WTC11 (cell line): ENCODE measurements at regions of chr11 and their contacts with region 1.

Region 1: GRCh38 chr11:45964911-45965389 is 42.5 kb downstream of the LARGE2 start:
- DNase-seq: peak; percentile 66
- ATAC-seq: peak; percentile 99
- H3K4me3 Mint-ChIP-seq: no peak overlapping the region
- H3K27ac Mint-ChIP-seq: no peak overlapping the region
- H3K4me1 Mint-ChIP-seq: no peaks in the 10 kb centered on the region
- H3K27me3 Mint-ChIP-seq: no peaks in the 10 kb centered on the region
- CTCF ChIP-seq: peak; percentile 85

Region 2: GRCh38 chr11:45852708-45853101 is 112.2 kb before region 1 on chr11:
- CTCF ChIA-PET with region 1: no interaction called
- POLR2A ChIA-PET with region 1: no interaction called
- DNase-seq: peak; percentile 39
- ATAC-seq: peak; percentile 76
- H3K4me3 Mint-ChIP-seq: no peak overlapping the region
- H3K27ac Mint-ChIP-seq: peak overlapping the region; percentile 81; the same call in 1 of the 2 replicates
- H3K4me1 Mint-ChIP-seq: peaks cover 43% of the 10 kb centered on the region
- H3K27me3 Mint-ChIP-seq: peaks cover 2% of the 10 kb centered on the region; the same call in 1 of the 2 replicates
- CTCF ChIP-seq: no peak

Region 3: DNA sequence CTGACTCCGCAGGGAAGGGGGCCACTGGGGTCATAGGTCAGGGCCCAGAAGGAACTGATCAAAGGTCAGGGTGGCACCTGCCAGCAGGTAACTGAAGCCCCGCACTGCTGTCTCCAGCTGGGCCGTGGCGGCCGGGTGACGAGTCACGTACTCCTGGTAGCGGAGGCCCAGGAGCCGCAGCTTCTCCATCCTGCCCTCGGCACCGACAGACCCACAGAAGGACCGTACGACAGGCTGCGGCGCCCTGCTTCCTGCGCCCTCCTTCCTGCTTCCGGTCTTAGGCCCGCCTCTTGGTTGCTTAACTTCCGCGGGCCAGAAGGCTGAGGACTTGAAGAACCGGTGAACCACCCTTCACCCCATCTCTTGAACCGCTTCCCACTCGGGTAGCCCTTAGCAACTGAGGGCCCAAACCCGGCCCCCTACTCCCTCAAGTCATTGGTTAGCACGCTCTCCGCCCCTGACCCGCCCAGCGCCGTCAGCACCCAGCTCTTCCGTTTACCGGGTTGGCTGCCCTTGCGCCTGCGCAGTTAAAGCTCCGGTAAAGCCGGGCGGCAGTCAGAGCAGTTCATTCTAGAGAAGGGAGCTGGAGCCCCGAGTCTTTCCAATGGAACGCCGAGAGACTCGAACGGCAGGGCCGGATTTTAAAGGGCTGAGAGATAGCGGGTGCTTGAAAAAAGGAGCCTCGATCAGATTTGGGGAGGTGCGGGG is 47.2 kb before region 1 on chr11 and contains the start of gene PEX16:
- CTCF ChIA-PET with region 1: interaction called, 17 read pairs
- POLR2A ChIA-PET with region 1: no interaction called
- DNase-seq: peak; percentile 94
- ATAC-seq: peak; percentile 68
- H3K4me3 Mint-ChIP-seq: peak within 1 kb of the TSS; percentile 93
- H3K27ac Mint-ChIP-seq: peak within 1 kb of the TSS; percentile 96
- H3K4me1 Mint-ChIP-seq: peaks cover 32% of the 10 kb centered on the region
- H3K27me3 Mint-ChIP-seq: peaks cover 2% of the 10 kb centered on the region; the same call in 1 of the 2 replicates
- CTCF ChIP-seq: no peak
- total RNA-seq, gene PEX16: 35.8 to 39.3 TPM (median 36.0 TPM) in 3 replicates

Region 4: DNA sequence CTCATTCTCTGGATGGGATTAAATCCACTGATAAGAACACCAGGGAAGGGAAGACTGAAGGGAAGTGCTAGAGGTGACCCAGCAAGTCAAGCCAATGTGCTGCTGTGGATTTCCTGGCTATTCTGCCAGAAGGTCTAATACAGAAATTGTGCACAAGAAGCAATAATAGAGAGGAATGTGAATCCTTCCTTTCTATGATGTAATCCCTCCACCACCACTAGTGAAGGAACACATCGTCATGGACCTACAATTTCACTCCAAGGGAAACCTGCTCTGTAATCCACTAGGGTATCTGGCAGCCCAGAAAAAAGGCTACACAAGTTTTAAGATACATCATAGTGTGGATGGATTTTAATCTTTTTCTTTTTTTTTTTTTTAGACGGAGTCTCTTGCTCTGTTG is 25.1 kb before region 1 on chr11:
- CTCF ChIA-PET with region 1: interaction called, 11 read pairs
- POLR2A ChIA-PET with region 1: no interaction called
- DNase-seq: no peak
- ATAC-seq: no peak
- H3K4me3 Mint-ChIP-seq: no peak overlapping the region
- H3K27ac Mint-ChIP-seq: no peak overlapping the region
- H3K4me1 Mint-ChIP-seq: peaks cover 10% of the 10 kb centered on the region
- H3K27me3 Mint-ChIP-seq: no peaks in the 10 kb centered on the region; the same call in 1 of the 2 replicates
- CTCF ChIP-seq: no peak

Region 5: DNA sequence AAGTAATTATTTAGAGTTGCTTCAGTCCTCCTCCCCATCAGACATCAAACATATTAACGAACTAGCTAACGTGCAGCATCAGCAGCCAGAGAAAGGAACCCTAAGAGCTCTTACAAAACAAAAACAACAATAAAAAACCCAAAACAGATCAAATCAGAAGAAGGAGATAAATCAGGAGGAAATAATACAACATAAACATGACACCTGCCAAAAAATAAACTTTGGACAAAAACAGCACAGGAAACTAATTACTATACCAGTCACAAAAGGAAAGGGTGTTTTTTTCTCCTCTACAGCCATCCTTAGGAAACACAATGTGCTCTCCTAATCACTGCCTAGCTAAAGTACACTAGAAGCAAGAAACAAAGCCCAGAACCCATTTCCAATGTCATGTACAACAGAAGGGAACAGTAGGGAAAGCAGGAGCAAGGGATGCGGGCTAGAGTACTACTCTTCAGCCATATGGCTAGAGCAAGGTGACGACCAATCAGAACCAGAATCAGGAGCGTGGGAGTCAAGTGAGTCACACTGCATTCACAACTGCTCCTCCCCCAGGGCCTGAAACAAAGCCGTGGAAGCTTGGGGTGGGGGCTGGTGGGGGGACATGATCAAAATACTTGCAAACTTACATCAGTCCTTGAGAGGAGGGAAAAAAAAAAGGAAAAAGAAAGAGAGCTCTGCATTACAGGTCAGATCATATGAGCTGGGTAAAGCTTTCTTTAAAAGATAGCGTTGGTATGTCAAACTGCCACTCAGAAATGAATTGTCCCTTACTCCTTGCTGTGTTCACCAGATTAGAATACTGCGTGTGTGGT is 17.9 kb after region 1 on chr11:
- CTCF ChIA-PET with region 1: interaction called, 31 read pairs
- POLR2A ChIA-PET with region 1: interaction called, 3 read pairs
- DNase-seq: peak; percentile 74
- ATAC-seq: peak; percentile 93
- H3K4me3 Mint-ChIP-seq: peak overlapping the region; percentile 43
- H3K27ac Mint-ChIP-seq: peak overlapping the region; percentile 94
- H3K4me1 Mint-ChIP-seq: peaks cover 29% of the 10 kb centered on the region
- H3K27me3 Mint-ChIP-seq: no peaks in the 10 kb centered on the region
- CTCF ChIP-seq: no peak

Region 6: GRCh38 chr11:46001448-46001914 is 36.5 kb after region 1 on chr11:
- CTCF ChIA-PET with region 1: interaction called, 156 read pairs
- POLR2A ChIA-PET with region 1: interaction called, 9 read pairs
- DNase-seq: no peak
- ATAC-seq: peak; percentile 84
- H3K4me3 Mint-ChIP-seq: peak overlapping the region; percentile 26
- H3K27ac Mint-ChIP-seq: peak overlapping the region; percentile 96
- H3K4me1 Mint-ChIP-seq: peaks cover 80% of the 10 kb centered on the region
- H3K27me3 Mint-ChIP-seq: no peaks in the 10 kb centered on the region
- CTCF ChIP-seq: no peak

Region 7: DNA sequence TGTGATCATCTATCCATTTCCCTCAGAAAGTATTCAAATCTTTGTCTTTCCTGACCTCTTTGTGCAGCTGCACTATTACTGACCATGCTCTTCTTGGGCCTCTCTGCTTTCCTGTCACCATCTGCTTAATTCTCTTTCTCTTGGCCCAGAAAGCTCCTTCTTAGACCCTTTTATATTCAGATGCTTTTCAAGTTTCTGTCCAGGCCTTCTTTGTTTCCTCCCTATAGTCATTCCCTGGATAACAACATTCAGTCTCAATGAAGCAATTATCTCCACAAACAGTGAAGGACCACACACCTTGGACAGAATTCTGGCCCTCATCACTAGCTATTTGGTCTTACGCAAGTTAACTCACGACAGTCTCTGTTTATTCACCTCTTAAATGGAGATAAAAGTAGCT is 47.2 kb after region 1 on chr11:
- CTCF ChIA-PET with region 1: interaction called, 156 read pairs
- POLR2A ChIA-PET with region 1: no interaction called
- DNase-seq: no peak
- ATAC-seq: peak; percentile 81
- H3K4me3 Mint-ChIP-seq: no peak overlapping the region
- H3K27ac Mint-ChIP-seq: peak overlapping the region; percentile 84
- H3K4me1 Mint-ChIP-seq: peaks cover 25% of the 10 kb centered on the region
- H3K27me3 Mint-ChIP-seq: no peaks in the 10 kb centered on the region
- CTCF ChIP-seq: no peak

Region 8: GRCh38 chr11:46106530-46107407 is 141.8 kb after region 1 on chr11:
- CTCF ChIA-PET with region 1: interaction called, 10 read pairs
- POLR2A ChIA-PET with region 1: interaction called, 3 read pairs
- DNase-seq: no peak
- ATAC-seq: peak; percentile 58
- H3K4me3 Mint-ChIP-seq: no peak overlapping the region
- H3K27ac Mint-ChIP-seq: peak overlapping the region; percentile 64
- H3K4me1 Mint-ChIP-seq: peaks cover 33% of the 10 kb centered on the region
- H3K27me3 Mint-ChIP-seq: no peaks in the 10 kb centered on the region
- CTCF ChIP-seq: no peak